Cardiac septum (tissue), 1 donor: ENCODE measurements at regions of chr4 and their contacts with region 1.

Region 1: DNA sequence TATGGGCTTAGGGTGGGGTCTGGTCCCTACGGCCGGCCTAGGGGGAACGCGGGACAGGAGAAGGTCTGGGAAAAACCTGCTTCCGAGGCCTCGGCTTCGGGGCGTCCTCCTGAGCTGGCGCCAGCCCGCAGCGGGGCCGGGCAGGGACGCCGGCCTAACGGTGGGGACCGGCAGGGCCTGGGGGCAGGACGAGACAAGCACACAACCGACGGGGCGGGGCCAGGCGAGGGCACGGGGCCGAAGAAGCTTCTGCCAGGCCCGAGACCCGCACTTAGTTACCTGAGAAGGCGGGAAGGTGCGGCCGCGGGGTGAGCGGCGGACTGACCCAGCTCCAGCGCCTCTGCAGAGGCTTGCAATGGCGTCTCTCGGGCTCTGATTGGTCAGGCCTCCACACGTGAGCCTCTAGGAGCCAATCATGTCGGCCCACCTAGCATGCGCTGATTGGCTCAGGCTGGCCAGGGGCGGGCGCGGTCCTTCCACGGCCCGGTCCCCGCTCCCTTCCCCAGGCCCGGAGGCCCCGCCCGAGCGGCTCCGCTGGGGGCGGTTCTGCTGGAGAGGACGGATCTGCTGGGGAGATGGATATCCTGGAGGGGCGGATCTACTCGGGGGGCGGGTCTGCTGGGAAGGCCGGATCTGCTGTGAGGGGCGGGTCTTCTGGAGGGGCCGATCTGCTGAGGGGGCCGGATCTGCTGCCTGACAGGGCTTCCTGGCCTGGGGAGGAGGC is 44.3 kb downstream of the CPLX1 start:
- DNase-seq: peak; percentile 99

Region 2: DNA sequence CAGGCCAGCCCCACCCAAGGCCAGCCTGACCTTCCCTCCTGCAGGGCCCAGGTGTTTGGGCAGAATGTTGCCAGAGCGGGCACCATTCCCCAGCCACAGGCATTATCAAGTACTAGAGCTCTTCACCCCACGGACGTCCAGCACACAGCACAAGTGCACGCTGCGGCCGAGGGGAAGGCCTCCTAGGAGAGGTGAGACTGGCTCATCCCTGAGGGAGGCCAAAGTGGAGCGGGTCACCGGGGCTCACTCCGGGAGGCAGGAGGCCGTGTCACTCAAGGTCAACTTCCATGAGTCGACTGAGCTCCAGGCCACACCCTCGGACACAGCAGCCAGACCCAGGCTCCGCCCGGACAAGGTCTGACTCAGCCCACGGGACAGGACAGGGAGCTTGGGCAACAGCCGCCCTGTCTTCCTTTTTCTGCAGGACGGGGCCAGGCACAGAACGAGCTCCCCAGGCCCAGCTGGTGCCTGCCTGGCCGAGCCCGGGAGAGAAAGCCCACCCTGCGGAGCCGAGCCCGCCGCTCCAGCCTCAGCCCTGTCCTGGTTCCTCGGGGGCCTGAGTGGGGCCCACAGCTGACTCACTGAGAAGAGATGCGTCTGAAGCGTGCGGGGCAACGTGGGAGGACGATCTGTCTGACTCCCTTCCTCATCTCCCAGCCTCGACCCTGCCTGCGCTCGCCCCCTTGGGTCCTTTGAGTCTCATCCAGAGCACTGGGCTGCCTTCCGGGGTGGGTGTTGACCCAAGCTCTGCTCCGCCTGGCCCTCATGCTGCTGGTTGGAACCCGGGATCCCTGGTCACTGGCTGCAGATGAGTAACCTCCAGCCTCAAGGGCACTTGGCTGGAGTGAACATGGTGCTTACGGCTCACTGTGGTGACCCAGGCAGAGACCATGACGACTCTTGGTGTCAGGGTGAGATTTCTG is 94.3 kb before region 1 on chr4:
- intact Hi-C with region 1: loop called (anchors 5 kb)
- DNase-seq: peak; percentile 97

Region 3: GRCh38 chr4:825238-825835 is 43.7 kb after region 1 on chr4:
- intact Hi-C with region 1: loop called (anchors 5 kb)
- DNase-seq: peak; percentile 58

Region 4: DNA sequence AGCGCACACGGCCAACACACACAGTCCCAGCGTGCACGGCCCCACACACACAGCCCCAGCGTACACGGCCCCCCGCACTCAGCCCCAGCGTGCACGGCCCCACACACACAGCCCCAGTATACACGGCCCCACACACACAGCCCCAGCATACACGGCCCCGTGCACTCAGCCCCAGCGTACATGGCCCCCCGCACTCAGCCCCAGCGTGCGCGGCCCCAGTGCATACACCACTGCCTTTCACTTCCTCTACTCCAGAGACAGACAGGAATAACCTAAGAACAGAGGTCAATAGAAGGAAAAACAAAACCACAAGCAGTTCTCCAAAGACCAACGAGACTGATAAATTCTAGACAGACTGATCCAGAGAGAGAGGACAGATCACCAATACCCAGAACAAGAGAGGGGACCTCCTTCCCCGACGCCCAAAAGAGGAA is 133.4 kb after region 1 on chr4:
- intact Hi-C with region 1: no loop called
- DNase-seq: peak; percentile 64